ENCODE measurements at regions of chr17 and their contacts with region 1.

Region 1: DNA sequence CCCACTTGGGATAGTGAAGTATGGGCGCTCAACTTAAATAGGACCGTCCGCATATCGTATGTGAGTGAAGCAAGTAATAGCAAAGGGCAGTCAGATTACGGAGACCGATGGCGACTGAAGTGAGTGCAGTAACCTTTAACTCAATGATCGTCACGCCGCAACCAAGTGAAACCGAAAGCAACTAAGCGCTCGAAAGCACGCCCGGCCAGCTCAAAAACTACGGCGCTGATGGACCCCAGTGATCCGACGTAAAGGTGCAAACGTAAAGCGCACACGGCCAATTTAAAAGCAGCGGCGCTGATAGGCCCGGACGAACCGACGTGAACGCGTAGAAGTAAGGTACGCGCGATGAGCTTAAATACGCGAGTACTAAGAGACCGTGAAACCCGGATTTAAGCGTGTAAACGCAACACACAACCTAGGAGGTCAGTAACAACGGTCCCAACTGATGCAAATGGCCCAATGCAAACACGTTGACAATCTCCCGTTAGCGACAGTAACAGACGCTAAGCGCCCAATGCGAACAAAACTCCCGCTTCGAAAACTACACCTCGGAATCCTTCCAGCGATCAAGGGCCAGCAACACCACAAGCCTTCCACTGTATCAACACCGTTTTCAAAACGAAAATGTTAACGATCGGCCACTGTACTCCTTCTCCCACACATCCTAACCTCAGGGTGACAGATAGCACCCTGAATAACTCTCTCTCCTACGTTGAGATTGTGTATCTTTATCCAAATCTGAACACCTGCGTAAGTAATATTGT is 37.9 kb upstream of the ARL4D start:
- DNase-seq: peak; percentile 99
- H3K4me3 Mint-ChIP-seq: peak overlapping the region; percentile 79
- H3K27ac Mint-ChIP-seq: peak overlapping the region; percentile 100
- H3K4me1 Mint-ChIP-seq: peaks cover 26% of the 10 kb centered on the region
- H3K27me3 Mint-ChIP-seq: no peaks in the 10 kb centered on the region
- CTCF ChIP-seq: no peak

Region 2: DNA sequence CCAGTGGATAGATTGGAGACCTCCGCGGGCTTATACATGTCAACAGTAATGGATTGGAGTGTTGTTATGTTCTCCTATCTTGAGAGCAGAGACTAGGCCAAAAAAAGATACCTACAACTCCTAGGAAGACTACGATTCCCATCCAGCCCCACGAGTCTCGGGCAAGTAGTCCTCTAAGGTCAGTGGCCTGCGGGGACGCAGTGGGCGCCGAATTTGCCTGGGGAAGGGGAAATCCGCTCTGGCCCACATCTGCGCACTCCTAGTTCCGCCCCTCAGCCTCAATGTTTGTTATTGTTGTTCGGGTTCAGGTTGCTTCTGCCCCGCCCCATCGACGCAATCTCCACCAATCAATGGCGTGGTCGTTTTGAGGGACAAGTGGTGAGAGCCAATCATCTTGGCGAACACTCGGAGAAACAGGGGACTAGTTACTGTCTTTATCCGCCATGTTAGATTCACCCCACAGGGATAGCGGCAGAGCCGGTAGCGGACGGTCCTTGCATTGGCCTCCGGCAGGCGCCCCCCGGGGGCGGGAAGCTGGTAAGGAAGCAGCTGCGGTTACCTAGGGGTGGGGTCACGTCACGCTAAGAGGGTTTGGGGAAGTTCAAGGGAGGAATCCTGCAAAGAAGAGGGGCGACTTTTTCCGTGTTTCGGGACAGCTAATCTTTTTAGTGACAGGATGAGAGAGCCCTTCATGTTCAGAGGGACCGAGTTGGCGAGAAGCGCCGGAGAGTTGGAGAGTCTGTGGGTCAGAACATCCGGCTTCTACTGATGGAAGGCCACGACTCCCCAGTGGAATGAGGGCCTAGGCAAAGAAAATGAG is 189.9 kb before region 1 on chr17 and contains the start of gene NBR1:
- CTCF ChIA-PET with region 1: no interaction called
- POLR2A ChIA-PET with region 1: interaction called, 14 read pairs
- intact Hi-C with region 1: no loop called
- DNase-seq: peak; percentile 99
- H3K4me3 Mint-ChIP-seq: no peak within 1 kb of the TSS
- H3K27ac Mint-ChIP-seq: no peak within 1 kb of the TSS
- H3K4me1 Mint-ChIP-seq: no peaks in the 10 kb centered on the region
- H3K27me3 Mint-ChIP-seq: no peaks in the 10 kb centered on the region
- CTCF ChIP-seq: no peak
- total RNA-seq, gene NBR1: 105 and 106 TPM in 2 replicates

Region 3: GRCh38 chr17:43316522-43317142 is 44.3 kb before region 1 on chr17:
- CTCF ChIA-PET with region 1: no interaction called
- POLR2A ChIA-PET with region 1: interaction called, 12 read pairs
- intact Hi-C with region 1: no loop called
- DNase-seq: no peak
- H3K4me3 Mint-ChIP-seq: no peak overlapping the region
- H3K27ac Mint-ChIP-seq: no peak overlapping the region
- H3K4me1 Mint-ChIP-seq: peaks cover 7% of the 10 kb centered on the region
- H3K27me3 Mint-ChIP-seq: no peaks in the 10 kb centered on the region
- CTCF ChIP-seq: no peak

Region 4: DNA sequence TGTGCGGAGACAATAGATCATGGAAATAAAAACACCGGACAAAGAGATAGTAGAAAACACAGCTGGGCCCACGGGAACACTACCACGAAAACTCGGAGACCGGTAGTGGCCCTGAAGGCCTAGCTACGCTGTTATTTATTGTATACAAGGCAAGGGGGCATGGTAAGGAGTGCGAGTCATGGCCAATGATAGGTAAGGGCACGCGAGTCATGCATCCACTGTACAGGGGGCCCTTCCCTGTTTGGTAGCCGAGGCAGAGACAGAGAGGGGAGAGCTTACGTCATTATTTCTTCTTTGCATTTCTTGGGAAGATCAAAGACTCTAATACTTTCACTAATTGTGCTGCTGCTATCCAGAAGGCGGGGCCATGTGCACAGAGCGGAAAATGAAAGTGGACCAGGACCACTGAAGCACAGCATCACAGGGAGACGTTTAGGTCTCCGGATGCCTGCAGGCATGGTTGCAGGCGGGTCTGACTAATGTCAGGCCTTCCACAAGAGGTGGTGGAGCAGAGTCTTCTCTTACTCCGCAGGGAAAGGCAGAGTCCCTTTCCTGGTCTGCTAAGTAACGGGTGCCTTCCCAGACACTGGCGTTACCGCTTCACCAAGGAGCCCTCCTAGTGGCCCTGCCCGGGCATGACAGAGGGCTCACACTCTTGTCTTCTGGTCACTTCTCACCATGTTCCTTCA is 36.6 kb before region 1 on chr17:
- CTCF ChIA-PET with region 1: interaction called, 3 read pairs
- POLR2A ChIA-PET with region 1: interaction called, 11 read pairs
- intact Hi-C with region 1: no loop called
- DNase-seq: no peak
- H3K4me3 Mint-ChIP-seq: no peak overlapping the region
- H3K27ac Mint-ChIP-seq: no peak overlapping the region
- H3K4me1 Mint-ChIP-seq: peaks cover 12% of the 10 kb centered on the region
- H3K27me3 Mint-ChIP-seq: no peaks in the 10 kb centered on the region
- CTCF ChIP-seq: no peak

Region 5: DNA sequence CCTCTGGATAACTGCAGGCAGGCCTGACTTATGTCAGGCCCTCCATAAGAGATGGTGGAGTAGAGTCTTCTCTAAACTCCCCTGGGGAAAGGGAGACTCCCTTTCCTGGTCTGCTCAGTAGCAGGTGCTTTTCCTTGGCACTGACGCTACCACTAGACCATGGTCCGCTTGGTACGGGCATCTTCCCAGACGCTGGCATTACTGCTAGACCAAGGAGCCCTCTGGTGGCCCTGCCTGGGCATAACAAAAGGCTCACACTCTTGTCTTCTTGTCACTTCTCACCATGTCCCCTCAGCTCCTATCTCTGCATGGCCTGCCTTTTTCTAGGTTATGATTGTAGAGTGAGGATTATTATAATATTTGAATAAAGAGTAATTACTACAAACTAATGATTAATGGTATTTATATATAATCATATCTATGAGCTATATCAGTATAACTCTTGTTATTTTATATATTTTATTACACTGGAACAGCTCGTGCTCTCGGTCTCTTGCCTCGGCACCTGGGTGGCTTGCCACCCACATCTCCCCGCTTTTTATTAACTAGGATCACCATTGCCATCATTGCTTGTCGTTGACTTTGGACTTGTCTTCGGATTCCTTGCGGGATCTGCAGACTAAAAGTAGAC is 21.9 kb before region 1 on chr17:
- CTCF ChIA-PET with region 1: interaction called, 16 read pairs
- POLR2A ChIA-PET with region 1: interaction called, 33 read pairs
- intact Hi-C with region 1: no loop called
- DNase-seq: peak; percentile 69
- H3K4me3 Mint-ChIP-seq: no peak overlapping the region
- H3K27ac Mint-ChIP-seq: no peak overlapping the region
- H3K4me1 Mint-ChIP-seq: peaks cover 17% of the 10 kb centered on the region
- H3K27me3 Mint-ChIP-seq: no peaks in the 10 kb centered on the region
- CTCF ChIP-seq: peak; percentile 65

Region 6: GRCh38 chr17:43388359-43389045 is 27.6 kb after region 1 on chr17:
- CTCF ChIA-PET with region 1: interaction called, 6 read pairs
- POLR2A ChIA-PET with region 1: interaction called, 350 read pairs
- intact Hi-C with region 1: loop called (anchors 1 kb)
- DNase-seq: peak; percentile 94
- H3K4me3 Mint-ChIP-seq: peak overlapping the region; percentile 83
- H3K27ac Mint-ChIP-seq: peak overlapping the region; percentile 97
- H3K4me1 Mint-ChIP-seq: peaks cover 18% of the 10 kb centered on the region
- H3K27me3 Mint-ChIP-seq: no peaks in the 10 kb centered on the region
- CTCF ChIP-seq: no peak

Region 7: GRCh38 chr17:43418441-43419374 is 57.8 kb after region 1 on chr17:
- CTCF ChIA-PET with region 1: no interaction called
- POLR2A ChIA-PET with region 1: interaction called, 30 read pairs
- intact Hi-C with region 1: no loop called
- DNase-seq: peak; percentile 94
- H3K4me3 Mint-ChIP-seq: peak overlapping the region; percentile 59
- H3K27ac Mint-ChIP-seq: peak overlapping the region; percentile 76
- H3K4me1 Mint-ChIP-seq: peaks cover 41% of the 10 kb centered on the region
- H3K27me3 Mint-ChIP-seq: no peaks in the 10 kb centered on the region
- CTCF ChIP-seq: no peak

Measured in MCF 10A (cell line).